Ascending aorta (tissue), 2 donors: ENCODE measurements at regions of chr2 and their contacts with region 1.

Region 1: GRCh38 chr2:69724540-69725159 is 17.3 kb upstream of the ANXA4 start:
- DNase-seq: peak; percentile 25 to 89
- H3K4me3 ChIP-seq: peak overlapping the region; percentile 11 to 53
- H3K27ac ChIP-seq: no peak overlapping the region
- H3K4me1 ChIP-seq: no peaks in the 10 kb centered on the region
- H3K27me3 ChIP-seq: no peaks in the 10 kb centered on the region
- CTCF ChIP-seq: peak; percentile 92 to 96 (median 93)

Region 2: DNA sequence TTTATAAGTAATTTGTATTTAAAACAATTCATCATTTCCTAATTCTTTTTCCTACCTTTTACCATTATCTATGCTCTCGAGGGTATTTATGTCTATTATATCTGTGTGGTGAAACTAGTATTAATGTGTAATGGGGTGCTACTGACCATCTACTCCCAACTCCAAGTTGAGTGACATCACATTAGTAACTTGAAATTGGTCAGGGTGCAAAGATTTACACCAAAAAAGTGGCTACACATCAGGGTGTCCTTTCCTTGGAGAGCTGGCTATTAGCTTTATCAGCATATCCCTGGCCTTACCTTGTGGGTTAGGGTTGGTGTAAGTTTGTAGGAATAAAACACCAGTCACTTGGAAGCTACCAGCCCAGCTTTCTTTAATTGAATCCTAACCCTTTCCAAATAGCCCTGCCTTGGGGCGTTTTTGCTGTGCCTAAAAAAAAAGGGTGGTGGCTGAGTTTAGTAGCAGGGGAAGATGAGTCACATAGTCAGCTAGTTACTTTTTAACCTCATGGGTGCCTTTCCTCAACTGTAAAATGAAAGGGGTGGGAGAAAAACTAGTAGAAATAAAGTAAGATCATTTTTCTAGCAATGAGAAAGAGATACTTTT is 31.3 kb after region 1 on chr2:
- intact Hi-C with region 1: no loop called
- DNase-seq: no peak
- H3K4me3 ChIP-seq: no peak overlapping the region
- H3K27ac ChIP-seq: peak overlapping the region; percentile 25 to 56
- H3K4me1 ChIP-seq: peaks cover 3 to 17% of the 10 kb centered on the region in 2 donors
- H3K27me3 ChIP-seq: no peaks in the 10 kb centered on the region
- CTCF ChIP-seq: no peak

Region 3: DNA sequence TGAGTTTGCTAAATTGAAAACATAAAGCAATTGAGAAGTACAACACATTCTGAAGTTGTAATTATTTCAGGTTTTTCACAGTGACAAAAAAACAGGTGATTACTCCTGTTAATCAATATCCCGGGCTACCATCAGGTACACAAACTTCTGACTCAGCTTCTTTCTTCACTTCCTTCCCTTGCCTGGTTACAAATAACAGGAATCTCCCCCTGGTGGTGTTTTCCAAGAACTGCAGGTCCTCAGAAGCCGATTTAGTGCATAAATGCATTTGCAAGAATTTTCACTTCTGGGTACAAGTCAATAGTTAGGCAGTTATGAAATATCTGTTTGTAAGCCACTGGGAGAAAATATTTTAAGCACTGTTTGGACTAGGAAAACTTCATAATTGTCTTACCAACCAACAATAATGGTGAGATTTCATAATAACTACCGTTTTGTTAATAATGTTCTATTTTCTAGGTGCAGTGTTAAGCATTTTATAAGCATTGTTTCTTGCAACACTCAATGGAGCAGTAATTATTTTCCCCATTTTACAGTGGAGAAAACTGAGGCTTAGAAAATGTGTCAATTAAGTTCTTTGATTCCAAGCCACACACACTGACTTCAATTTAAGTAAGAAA is 92.4 kb after region 1 on chr2:
- intact Hi-C with region 1: loop called (anchors 1 kb)
- DNase-seq: peak in 1 of 2 donors; percentile 92
- H3K4me3 ChIP-seq: no peak overlapping the region
- H3K27ac ChIP-seq: no peak overlapping the region
- H3K4me1 ChIP-seq: peaks cover 0 to 3% of the 10 kb centered on the region in 2 donors
- H3K27me3 ChIP-seq: no peaks in the 10 kb centered on the region
- CTCF ChIP-seq: peak; percentile 89 to 93 (median 92)